ENCODE measurements at regions of chr16 and their contacts with region 1.

Region 1: DNA sequence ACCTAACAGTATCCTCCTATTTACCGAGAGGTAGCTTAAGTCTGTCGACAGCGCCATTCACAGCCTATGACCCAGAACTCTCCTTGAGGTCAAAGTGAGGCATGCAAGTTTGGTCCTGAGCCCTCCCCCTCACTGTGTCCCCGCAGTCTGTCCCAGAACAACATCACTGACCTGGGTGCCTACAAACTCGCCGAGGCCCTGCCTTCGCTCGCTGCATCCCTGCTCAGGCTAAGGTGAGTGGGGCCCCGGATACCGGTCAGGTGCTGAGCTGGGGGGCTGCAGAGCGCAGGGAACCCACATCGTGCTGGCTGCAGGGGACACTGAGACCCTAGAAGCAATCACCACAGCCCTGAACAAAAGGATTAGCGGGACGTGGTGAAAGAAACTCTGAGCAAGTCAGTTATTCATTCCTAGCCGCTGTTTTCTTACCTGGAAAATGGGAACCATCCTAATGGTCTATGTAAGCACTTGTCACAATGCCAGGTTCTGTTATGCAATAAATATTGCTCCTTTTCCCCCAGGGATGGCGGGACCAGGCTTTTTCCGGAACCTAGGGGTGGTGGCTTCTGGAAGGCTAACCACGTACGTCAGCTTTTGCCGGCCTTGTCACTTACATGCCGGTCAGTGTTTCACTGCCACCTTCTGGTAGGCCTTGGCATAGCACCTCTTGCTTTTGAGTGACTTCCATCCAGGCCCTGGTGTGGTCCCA is 23.8 kb downstream of the DEXI start:
- DNase-seq: peak; percentile 81
- CTCF ChIP-seq: peak; percentile 86

Region 2: GRCh38 chr16:10521681-10522274 is 396.7 kb before region 1 on chr16:
- CTCF ChIA-PET with region 1: interaction called, 10 read pairs
- POLR2A ChIA-PET with region 1: no interaction called
- DNase-seq: peak; percentile 67
- CTCF ChIP-seq: peak; percentile 60

Region 3: GRCh38 chr16:10752843-10753523 is 165.5 kb before region 1 on chr16:
- CTCF ChIA-PET with region 1: interaction called, 15 read pairs
- POLR2A ChIA-PET with region 1: no interaction called
- DNase-seq: peak; percentile 49
- CTCF ChIP-seq: no peak

Region 4: GRCh38 chr16:10888320-10888937 is 30.0 kb before region 1 on chr16:
- CTCF ChIA-PET with region 1: interaction called, 11 read pairs
- POLR2A ChIA-PET with region 1: interaction called, 3 read pairs
- DNase-seq: no peak
- CTCF ChIP-seq: no peak

Region 5: GRCh38 chr16:10929853-10930754 is 11.7 kb after region 1 on chr16:
- CTCF ChIA-PET with region 1: interaction called, 25 read pairs
- POLR2A ChIA-PET with region 1: interaction called, 8 read pairs
- DNase-seq: no peak
- CTCF ChIP-seq: no peak

Region 6: DNA sequence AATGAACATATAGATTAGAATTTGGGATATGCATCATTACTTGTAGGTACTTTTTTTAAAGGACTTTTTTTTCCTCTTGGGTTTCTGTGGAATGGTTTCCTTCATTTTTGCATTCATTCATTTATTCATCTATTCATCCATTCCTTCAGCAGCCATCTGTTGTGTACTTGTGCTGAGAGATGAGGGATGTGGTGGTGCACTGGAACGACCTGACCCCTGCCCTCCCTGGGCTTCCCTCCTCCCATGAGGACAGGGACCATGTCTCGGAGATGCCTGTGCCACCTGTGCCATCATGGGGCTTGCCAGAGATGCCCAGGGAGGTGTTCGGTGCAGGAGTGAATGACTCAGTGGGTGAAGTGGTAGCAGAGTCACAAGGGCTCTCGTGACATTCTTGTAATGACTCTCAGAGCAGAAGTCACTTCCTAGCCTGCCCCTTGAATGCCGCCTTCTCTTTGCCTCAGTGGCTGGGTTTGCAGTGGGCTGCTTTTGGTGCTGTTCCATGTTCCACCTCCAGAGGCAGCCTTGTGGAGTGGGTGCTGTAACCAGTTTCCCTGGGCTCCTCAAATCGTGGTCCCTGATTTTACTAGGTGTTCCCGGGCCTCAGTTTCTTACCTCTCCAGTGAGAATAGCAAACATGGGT is 69.8 kb after region 1 on chr16:
- CTCF ChIA-PET with region 1: no interaction called
- POLR2A ChIA-PET with region 1: no interaction called
- DNase-seq: peak; percentile 49
- CTCF ChIP-seq: peak; percentile 44